Activated CD4-positive, alpha-beta memory T cell treated with anti-CD3 and anti-CD28 coated beads for 36 hours (primary cell): ENCODE measurements at regions of chr13 and their contacts with region 1.

Region 1: DNA sequence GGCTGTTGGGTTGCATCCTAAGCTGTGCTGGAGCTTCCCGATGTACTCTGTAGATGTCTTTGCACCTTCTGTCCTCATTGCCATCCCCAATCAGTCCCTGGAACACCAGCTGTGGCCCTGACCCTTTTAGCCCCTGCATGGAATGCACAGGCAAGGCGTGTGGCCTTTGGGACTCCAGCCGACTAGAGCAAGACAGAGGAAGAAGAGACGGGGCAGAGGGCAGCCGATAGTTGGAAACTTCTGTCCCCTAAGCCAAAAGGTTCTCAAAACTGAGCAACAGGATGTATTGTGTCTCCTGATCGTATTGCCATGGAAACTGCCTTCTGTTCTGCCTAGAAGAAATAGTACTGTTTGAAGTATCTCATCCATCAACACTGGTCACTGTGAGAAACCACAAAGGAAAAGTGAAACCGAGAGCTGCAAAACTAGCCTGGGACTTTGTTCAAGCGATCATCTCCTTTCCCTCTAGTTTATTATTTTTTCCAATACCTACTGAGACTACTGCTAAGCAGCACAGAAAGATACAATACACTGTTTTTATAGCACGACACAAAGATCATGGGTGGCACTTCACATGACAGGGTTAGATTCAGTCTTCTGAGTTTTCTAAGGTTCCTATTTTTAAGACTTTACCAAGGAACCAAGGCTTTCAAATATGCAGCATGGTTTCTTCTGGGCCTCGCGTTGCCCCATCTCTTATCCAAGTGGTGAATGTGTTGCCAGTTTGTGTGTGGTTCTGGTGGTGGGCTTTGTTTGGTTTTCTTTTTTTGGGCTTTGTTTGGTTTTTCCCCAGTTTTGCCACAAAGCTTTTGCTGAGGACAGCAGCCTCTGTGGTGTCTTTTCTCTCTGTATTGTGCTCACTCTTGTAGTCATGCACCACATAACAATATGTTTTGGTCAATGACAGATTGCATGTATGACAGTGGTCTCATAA is 49.2 kb upstream of the GPR183 start:
- DNase-seq: peak; percentile 62
- H3K4me3 Mint-ChIP-seq: peak overlapping the region; percentile 56
- H3K27ac Mint-ChIP-seq: peak overlapping the region; percentile 95
- H3K4me1 Mint-ChIP-seq: peaks cover 96% of the 10 kb centered on the region
- H3K27me3 Mint-ChIP-seq: no peaks in the 10 kb centered on the region

Region 2: GRCh38 chr13:99057310-99057975 is 299.0 kb before region 1 on chr13:
- CTCF ChIA-PET with region 1: no interaction called
- POLR2A ChIA-PET with region 1: no interaction called
- intact Hi-C with region 1: loop called (anchors 10 kb)
- DNase-seq: no peak
- H3K4me3 Mint-ChIP-seq: no peak overlapping the region
- H3K27ac Mint-ChIP-seq: no peak overlapping the region
- H3K4me1 Mint-ChIP-seq: peaks cover 56% of the 10 kb centered on the region
- H3K27me3 Mint-ChIP-seq: no peaks in the 10 kb centered on the region

Region 3: GRCh38 chr13:99296398-99296797 is 60.0 kb before region 1 on chr13:
- CTCF ChIA-PET with region 1: interaction called, 5 read pairs
- POLR2A ChIA-PET with region 1: interaction called, 246 read pairs
- intact Hi-C with region 1: loop called (anchors 1 kb)
- DNase-seq: no peak
- H3K4me3 Mint-ChIP-seq: peak overlapping the region; percentile 47
- H3K27ac Mint-ChIP-seq: peak overlapping the region; percentile 88
- H3K4me1 Mint-ChIP-seq: peaks cover 80% of the 10 kb centered on the region
- H3K27me3 Mint-ChIP-seq: no peaks in the 10 kb centered on the region

Region 4: GRCh38 chr13:99322297-99323103 is 33.9 kb before region 1 on chr13:
- CTCF ChIA-PET with region 1: interaction called, 27 read pairs
- POLR2A ChIA-PET with region 1: interaction called, 136 read pairs
- intact Hi-C with region 1: loop called (anchors 1 kb)
- DNase-seq: peak; percentile 53
- H3K4me3 Mint-ChIP-seq: peak overlapping the region; percentile 27
- H3K27ac Mint-ChIP-seq: peak overlapping the region; percentile 93
- H3K4me1 Mint-ChIP-seq: peaks cover 84% of the 10 kb centered on the region
- H3K27me3 Mint-ChIP-seq: no peaks in the 10 kb centered on the region

Region 5: GRCh38 chr13:99380921-99381645 is 24.7 kb after region 1 on chr13:
- CTCF ChIA-PET with region 1: interaction called, 18 read pairs
- POLR2A ChIA-PET with region 1: interaction called, 20 read pairs
- intact Hi-C with region 1: loop called (anchors 1 kb)
- DNase-seq: peak; percentile 87
- H3K4me3 Mint-ChIP-seq: peak overlapping the region; percentile 36
- H3K27ac Mint-ChIP-seq: peak overlapping the region; percentile 89
- H3K4me1 Mint-ChIP-seq: peaks cover 84% of the 10 kb centered on the region
- H3K27me3 Mint-ChIP-seq: no peaks in the 10 kb centered on the region